ENCODE measurements at regions of chr14 and their contacts with region 1.

Region 1: GRCh38 chr14:45253068-45253753 is at the start of gene MIS18BP1:
- DNase-seq: peak; percentile 94 to 96 (median 95)
- H3K4me3 ChIP-seq: peak within 1 kb of the TSS; percentile 94 to 98 (median 95)
- H3K4me3 Mint-ChIP-seq: peak within 1 kb of the TSS; percentile 90 to 93
- H3K27ac ChIP-seq: peak within 1 kb of the TSS; percentile 83 to 93
- H3K27ac Mint-ChIP-seq: peak within 1 kb of the TSS; percentile 92 to 98 (median 96)
- H3K4me1 ChIP-seq: peaks cover 49 to 61% of the 10 kb centered on the region in 2 donors
- H3K4me1 Mint-ChIP-seq: peaks cover 44% of the 10 kb centered on the region
- H3K27me3 ChIP-seq: no peaks in the 10 kb centered on the region
- H3K27me3 Mint-ChIP-seq: peaks cover 0 to 1% (median 0%) of the 10 kb centered on the region in 3 donors
- CTCF ChIP-seq: peak; percentile 61
- polyA plus RNA-seq, gene MIS18BP1: 39.2 to 61.8 (median 45.6) TPM

Region 2: GRCh38 chr14:45134051-45134958 is 118.9 kb before region 1 on chr14 and contains the start of gene FKBP3:
- intact Hi-C with region 1: loop called (anchors 2 kb)
- DNase-seq: peak; percentile 96 to 98 (median 97)
- H3K4me3 ChIP-seq: peak within 1 kb of the TSS; percentile 59 to 99 (median 91)
- H3K4me3 Mint-ChIP-seq: peak within 1 kb of the TSS; percentile 98 to 99
- H3K27ac ChIP-seq: peak within 1 kb of the TSS; percentile 73 to 87
- H3K27ac Mint-ChIP-seq: peak within 1 kb of the TSS; percentile 95 to 98 (median 97)
- H3K4me1 ChIP-seq: peaks cover 19 to 28% of the 10 kb centered on the region in 2 donors
- H3K4me1 Mint-ChIP-seq: peaks cover 30% of the 10 kb centered on the region
- H3K27me3 ChIP-seq: no peaks in the 10 kb centered on the region
- H3K27me3 Mint-ChIP-seq: no peaks in the 10 kb centered on the region
- CTCF ChIP-seq: no peak
- polyA plus RNA-seq, gene FKBP3: 18.1 to 50.3 (median 42.5) TPM

Measured in CD14-positive monocyte (primary cell).